Head of caudate nucleus (tissue), 42 donors: ENCODE measurements at regions of chr13 and their contacts with region 1.

Region 1: GRCh38 chr13:39105110-39105509 is 66.9 kb downstream of the NHLRC3 start:
- DNase-seq: peak in 5 of 42 donors; percentile 37 to 70 (median 41)

Region 2: GRCh38 chr13:39051157-39051556 is 54.0 kb before region 1 on chr13:
- intact Hi-C with region 1: loop called (anchors 10 kb)
- DNase-seq: no peak

Region 3: DNA sequence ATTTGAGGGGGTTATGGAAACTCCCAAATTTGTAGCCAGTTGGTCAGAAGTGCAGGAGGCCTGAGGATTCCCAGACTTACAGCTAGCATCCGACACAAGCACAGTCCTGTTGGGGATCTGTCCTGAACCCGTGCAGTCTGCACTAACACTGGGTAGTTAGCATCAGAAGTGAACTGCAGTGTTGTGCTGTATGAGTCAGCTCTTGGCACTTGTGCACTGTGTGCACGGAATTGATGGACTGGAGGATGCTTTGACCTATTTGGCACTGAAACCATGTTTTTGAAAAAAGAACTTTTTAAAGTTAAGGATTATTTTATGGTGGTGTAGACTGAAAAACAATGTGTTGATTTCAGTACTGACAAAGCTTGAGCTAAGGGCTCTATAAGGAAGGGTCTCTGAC is 212.2 kb after region 1 on chr13:
- intact Hi-C with region 1: no loop called
- DNase-seq: peak in 15 of 42 donors; percentile 7 to 63 (median 28)

Region 4: GRCh38 chr13:39364947-39365484 is 259.9 kb after region 1 on chr13:
- intact Hi-C with region 1: no loop called
- DNase-seq: no peak